Activated CD4-positive, alpha-beta T cell treated with anti-CD3 and anti-CD28 coated beads, Interleukin-2, amount 10 ng/mL, durations not matched to agents 24 days and 14 days (primary cell): ENCODE measurements at regions of chr2 and their contacts with region 1.

Region 1: GRCh38 chr2:23487735-23488510 is 102.9 kb downstream of the KLHL29 start:
- DNase-seq: peak; percentile 65
- H3K4me3 Mint-ChIP-seq: peak overlapping the region; percentile 73
- H3K27ac Mint-ChIP-seq: peak overlapping the region; percentile 84
- H3K4me1 Mint-ChIP-seq: peaks cover 57% of the 10 kb centered on the region
- H3K27me3 Mint-ChIP-seq: peaks cover 8% of the 10 kb centered on the region

Region 2: DNA sequence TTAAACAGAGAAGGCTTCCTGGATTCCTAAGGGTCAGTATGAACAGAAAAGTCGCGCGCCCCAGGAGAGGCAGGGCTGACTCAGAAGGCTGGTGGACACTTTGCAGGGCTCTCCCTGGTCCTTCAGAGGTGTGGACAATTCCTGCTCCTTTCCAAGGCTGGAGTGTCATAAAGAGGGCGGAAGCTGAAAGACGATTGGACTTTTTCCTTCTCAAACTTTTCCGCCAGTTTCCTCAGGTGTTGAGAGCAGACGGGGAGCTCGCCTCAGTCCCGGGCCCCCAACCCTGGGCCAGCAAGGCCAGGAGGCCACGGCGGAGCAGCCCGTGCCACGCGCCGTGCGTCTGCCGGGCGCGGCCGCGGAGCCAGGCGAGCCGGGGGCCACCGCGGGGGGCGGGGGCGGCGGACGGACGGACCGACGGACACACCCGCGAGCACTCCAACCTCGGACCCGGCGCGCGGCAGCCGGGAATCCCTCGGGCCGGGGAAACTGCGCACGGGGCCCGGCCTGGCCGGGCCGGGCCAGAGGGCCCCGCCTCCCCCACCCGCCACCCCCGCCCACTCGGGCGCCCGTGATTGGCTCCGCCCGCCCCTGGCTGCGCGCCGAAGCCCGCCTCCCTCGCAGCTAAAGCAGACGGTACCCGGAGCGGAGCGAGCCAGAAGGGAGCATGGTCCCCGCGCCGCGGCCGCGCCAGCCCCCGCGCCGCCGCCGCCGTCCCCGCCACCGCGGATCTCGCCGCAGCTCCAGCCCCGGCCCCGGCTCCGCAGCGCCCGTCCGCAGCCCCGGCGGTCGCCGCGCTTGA is 103.2 kb before region 1 on chr2 and contains the start of gene KLHL29:
- intact Hi-C with region 1: loop called (anchors 2 kb)
- DNase-seq: peak; percentile 93
- H3K4me3 Mint-ChIP-seq: peak within 1 kb of the TSS; percentile 85
- H3K27ac Mint-ChIP-seq: peak within 1 kb of the TSS; percentile 79
- H3K4me1 Mint-ChIP-seq: peaks cover 26% of the 10 kb centered on the region
- H3K27me3 Mint-ChIP-seq: peaks cover 68% of the 10 kb centered on the region
- total RNA-seq, gene KLHL29: 3.7 and 3.8 TPM in 2 replicates

Region 3: DNA sequence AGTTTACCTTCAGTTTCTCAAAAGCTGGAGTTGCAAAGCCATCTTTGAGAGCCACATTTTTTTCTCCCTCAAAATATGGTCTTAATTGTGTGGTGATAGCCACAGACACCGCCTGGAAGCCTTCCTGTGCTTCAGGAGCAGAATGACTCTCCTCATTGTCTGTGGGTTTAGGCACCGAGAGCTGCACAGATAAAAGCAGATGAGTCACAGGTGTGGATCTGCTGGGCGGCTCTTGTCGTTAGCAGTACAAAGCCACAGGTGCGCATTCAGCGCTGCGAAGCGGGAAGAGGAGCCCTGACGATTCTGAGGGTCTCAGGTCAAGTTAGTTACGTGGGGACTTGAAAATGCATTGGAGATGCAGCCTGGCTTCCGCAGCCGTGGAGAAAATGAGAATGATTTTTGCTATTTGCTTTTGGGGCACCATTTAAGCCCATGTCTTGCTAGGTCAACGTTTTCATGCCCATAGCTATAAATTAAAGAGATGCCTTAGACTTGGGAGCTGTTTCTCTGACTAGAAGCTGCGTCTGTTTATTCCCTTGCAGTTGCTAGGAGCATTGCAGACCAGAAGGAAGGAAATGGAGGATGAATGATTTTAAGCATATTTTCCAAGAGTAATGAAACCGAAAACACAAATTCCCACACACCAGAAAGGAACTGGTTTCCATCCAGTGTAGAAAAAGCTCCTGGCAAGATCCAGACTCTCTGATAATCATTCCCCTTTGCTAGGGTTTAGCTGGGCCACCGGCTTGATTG is 51.4 kb before region 1 on chr2:
- intact Hi-C with region 1: loop called (anchors 1 kb)
- DNase-seq: peak; percentile 75
- H3K4me3 Mint-ChIP-seq: peak overlapping the region; percentile 30
- H3K27ac Mint-ChIP-seq: peak overlapping the region; percentile 12
- H3K4me1 Mint-ChIP-seq: peaks cover 13% of the 10 kb centered on the region
- H3K27me3 Mint-ChIP-seq: peaks cover 27% of the 10 kb centered on the region

Region 4: GRCh38 chr2:23452853-23453420 is 35.0 kb before region 1 on chr2:
- intact Hi-C with region 1: loop called (anchors 5 kb)
- DNase-seq: peak; percentile 78
- H3K4me3 Mint-ChIP-seq: peak overlapping the region; percentile 58
- H3K27ac Mint-ChIP-seq: peak overlapping the region; percentile 18
- H3K4me1 Mint-ChIP-seq: peaks cover 30% of the 10 kb centered on the region
- H3K27me3 Mint-ChIP-seq: peaks cover 7% of the 10 kb centered on the region

Region 5: DNA sequence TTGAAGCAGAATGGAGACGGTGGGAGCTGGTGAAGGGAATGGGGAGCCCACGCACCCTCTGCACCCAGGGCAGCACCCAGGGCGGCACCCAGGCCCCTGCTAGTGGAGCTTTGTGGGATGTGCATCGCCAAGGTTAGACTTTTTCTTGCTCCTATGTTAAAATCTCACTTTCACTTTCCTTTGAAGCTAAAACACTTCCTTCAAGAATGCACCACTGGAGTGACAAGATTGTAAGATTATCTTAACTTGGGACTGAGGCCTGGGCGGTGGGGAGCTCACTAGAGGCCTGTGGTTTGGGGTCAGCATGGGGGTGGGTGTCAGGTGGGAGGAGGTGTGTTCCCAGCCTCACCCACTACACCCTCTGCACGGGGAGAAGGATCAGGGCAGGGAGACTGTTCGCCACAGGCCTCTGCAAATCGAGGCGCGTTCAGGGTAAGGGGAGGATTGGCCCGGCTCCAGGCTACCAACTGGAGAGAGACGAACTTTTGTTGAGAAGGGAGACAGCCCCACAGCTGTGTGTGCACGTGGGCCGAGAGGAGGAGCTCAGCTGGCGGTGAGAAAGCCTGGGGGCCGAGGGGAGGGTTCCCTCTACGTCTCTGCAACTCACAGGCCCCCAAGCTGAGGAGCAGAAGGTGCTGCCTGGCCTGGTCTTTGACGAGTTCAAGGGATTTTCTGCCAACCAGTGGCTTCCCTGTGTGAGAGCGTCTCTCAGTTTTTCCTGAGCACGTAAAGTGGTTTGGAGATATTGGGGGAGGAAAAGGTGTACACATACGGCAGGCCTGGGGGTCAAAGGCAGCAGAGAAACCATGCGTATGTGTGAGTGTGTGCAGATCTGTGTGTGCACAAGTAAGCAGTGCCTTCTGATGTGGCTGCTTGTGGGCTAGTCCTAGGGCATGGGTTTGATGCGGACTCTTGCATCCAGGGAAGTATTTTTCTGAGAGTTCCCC is 44.7 kb after region 1 on chr2:
- intact Hi-C with region 1: loop called (anchors 1 kb)
- DNase-seq: peak; percentile 85
- H3K4me3 Mint-ChIP-seq: peak overlapping the region; percentile 85
- H3K27ac Mint-ChIP-seq: peak overlapping the region; percentile 94
- H3K4me1 Mint-ChIP-seq: peaks cover 38% of the 10 kb centered on the region
- H3K27me3 Mint-ChIP-seq: no peaks in the 10 kb centered on the region